ENCODE measurements at regions of chr14 and their contacts with region 1.

Region 1: DNA sequence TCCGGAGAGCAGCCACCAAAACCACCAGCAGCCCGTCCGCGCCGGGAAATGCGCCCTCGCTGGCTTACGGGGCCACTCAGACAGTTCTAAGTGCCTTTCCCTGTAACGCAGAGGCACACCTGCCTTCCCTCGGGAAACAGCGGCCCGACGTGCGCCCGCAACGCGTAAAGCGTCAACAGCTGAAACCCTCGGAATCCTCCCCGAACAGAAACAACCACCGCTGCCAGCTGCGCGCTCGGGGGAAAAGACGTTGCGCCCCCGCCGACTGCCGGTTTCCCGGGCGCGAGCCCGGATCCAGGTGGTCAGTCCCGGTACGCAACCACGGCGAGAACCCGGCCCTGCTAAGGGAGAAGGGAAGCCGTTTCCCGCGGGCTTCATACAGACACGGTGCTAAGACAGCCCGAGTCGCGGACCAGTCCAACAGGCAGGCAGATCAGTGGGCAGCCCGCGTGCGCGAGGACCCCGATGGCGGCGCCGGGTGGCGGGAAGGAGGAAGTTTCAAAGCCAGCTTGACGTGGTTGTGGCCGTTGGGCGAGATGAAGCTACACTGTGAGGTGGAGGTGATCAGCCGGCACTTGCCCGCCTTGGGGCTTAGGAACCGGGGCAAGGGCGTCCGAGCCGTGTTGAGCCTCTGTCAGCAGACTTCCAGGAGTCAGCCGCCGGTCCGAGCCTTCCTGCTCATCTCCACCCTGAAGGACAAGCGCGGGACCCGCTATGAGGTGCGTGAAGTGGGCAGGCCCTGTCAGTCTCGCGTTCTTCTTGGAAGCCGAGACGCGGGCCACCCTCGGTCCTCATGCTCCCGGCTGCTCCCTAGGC is at the start of gene LRR1:
- DNase-seq: peak; percentile 90
- ATAC-seq: peak; percentile 76
- H3K4me3 Mint-ChIP-seq: peak within 1 kb of the TSS; percentile 99
- H3K27ac Mint-ChIP-seq: peak within 1 kb of the TSS; percentile 99
- H3K4me1 Mint-ChIP-seq: peaks cover 19% of the 10 kb centered on the region
- H3K27me3 Mint-ChIP-seq: no peaks in the 10 kb centered on the region
- total RNA-seq, gene LRR1: 37.3 to 47.9 TPM

Region 2: GRCh38 chr14:49585803-49586672 is 12.7 kb before region 1 on chr14 and contains the start of gene RPS29:
- CTCF ChIA-PET with region 1: interaction called, 41 read pairs
- POLR2A ChIA-PET with region 1: interaction called, 17 read pairs
- intact Hi-C with region 1: loop called (anchors 1 kb)
- DNase-seq: peak; percentile 99
- ATAC-seq: peak; percentile 84
- H3K4me3 Mint-ChIP-seq: peak within 1 kb of the TSS; percentile 92
- H3K27ac Mint-ChIP-seq: peak within 1 kb of the TSS; percentile 96
- H3K4me1 Mint-ChIP-seq: peaks cover 40% of the 10 kb centered on the region
- H3K27me3 Mint-ChIP-seq: no peaks in the 10 kb centered on the region
- total RNA-seq, gene RPS29: 481 to 1,987 TPM

Region 3: GRCh38 chr14:49620182-49621113 is 21.8 kb after region 1 on chr14 and contains the starts of genes MGAT2 and RPL36AL:
- CTCF ChIA-PET with region 1: interaction called, 10 read pairs
- POLR2A ChIA-PET with region 1: interaction called, 22 read pairs
- intact Hi-C with region 1: loop called (anchors 1 kb)
- DNase-seq: peak; percentile 97
- ATAC-seq: peak; percentile 90
- H3K4me3 Mint-ChIP-seq: peak within 1 kb of the TSS; percentile 93
- H3K27ac Mint-ChIP-seq: peak within 1 kb of the TSS; percentile 97
- H3K4me1 Mint-ChIP-seq: peaks cover 51% of the 10 kb centered on the region
- H3K27me3 Mint-ChIP-seq: no peaks in the 10 kb centered on the region
- total RNA-seq, gene MGAT2: 23.8 to 32.2 TPM
- total RNA-seq, gene RPL36AL: 272 to 309 TPM

Region 4: DNA sequence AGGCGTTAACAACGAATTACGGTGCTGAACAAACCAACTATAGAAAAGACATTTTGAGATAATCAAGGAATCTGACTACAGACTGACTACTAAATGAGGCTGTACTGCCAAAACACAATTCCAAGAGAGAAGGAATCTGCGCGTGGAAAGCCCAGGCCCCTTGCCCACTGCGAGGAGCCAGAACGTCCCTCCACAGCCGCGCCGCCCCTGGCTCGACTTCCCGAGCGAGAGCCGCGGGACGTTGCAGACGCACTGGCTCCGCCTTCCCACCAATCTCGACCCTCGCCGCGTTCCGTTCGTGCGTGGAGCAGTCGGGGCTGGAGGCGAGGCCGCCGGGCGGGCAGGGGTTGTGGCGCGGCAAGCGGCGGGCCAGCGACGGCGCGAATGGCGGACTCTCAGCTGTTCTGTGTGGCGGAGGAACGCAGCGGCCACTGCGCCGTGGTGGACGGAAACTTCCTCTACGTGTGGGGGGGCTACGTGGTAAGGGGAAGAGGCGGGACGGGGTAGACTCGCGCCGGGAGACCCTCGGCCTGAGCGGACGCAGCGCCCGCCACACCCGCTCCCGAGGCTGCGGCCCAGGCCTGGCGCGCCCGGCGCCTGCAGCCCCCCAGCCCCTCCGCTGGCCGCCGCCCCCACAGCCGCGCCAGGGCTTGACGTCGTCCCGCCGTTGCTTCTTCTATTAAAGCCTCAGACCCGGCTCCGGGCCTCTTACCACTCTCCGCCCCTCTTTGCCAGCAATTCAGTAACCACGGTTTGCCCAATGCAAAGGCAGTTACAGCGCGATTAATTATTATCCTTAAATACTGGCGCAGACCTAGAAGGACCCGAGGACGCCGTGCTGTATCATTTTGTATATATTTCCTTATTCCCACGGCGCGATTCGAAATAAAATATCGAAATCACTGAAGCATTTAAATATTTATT is 94.4 kb after region 1 on chr14 and contains the start of gene KLHDC1:
- CTCF ChIA-PET with region 1: no interaction called
- POLR2A ChIA-PET with region 1: no interaction called
- intact Hi-C with region 1: no loop called
- DNase-seq: peak; percentile 86
- ATAC-seq: peak; percentile 63
- H3K4me3 Mint-ChIP-seq: peak within 1 kb of the TSS; percentile 72
- H3K27ac Mint-ChIP-seq: peak within 1 kb of the TSS; percentile 92
- H3K4me1 Mint-ChIP-seq: peaks cover 42% of the 10 kb centered on the region
- H3K27me3 Mint-ChIP-seq: no peaks in the 10 kb centered on the region
- total RNA-seq, gene KLHDC1: 0.81 to 1.3 TPM

Measured in activated CD4-positive, alpha-beta T cell treated with anti-CD3 and anti-CD28 coated beads for 36 hours (primary cell).